ENCODE measurements at regions of chr13 and their contacts with region 1.

Region 1: DNA sequence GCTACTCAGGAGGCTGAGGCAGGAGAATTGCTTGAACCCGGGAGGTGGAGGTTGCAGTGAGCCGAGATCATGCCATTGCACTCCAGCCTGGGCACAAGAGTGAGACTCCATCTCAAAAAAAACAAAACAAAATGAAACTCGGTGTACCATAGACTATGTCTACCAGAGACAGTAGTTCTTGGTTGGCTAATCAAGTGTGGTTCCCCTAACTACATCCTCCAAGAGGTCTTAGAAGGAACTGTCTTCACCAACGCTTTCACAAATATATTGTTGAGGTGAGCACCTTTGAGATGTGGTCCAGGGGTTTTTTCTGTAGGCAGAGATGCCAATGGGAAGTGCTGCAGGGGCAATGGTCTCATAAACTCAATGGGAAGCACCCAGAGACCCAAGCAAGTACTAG is 48.0 kb downstream of the RFC3 start:
- DNase-seq: no peak
- ATAC-seq: no peak
- H3K4me3 ChIP-seq: no peak overlapping the region
- H3K4me3 Mint-ChIP-seq: no peak overlapping the region
- H3K27ac ChIP-seq: no peak overlapping the region
- H3K27ac Mint-ChIP-seq: no peak overlapping the region
- H3K4me1 ChIP-seq: no peaks in the 10 kb centered on the region
- H3K4me1 Mint-ChIP-seq: no peaks in the 10 kb centered on the region
- H3K27me3 ChIP-seq: no peaks in the 10 kb centered on the region
- H3K27me3 Mint-ChIP-seq: no peaks in the 10 kb centered on the region

Region 2: GRCh38 chr13:33953203-33953602 is 87.3 kb after region 1 on chr13:
- CTCF ChIA-PET with region 1: no interaction called
- POLR2A ChIA-PET with region 1: interaction called in 1 of 2 experiments, 11 read pairs
- DNase-seq: no peak
- ATAC-seq: no peak
- H3K4me3 ChIP-seq: no peak overlapping the region
- H3K4me3 Mint-ChIP-seq: no peak overlapping the region
- H3K27ac ChIP-seq: no peak overlapping the region
- H3K27ac Mint-ChIP-seq: no peak overlapping the region
- H3K4me1 ChIP-seq: no peaks in the 10 kb centered on the region
- H3K4me1 Mint-ChIP-seq: no peaks in the 10 kb centered on the region
- H3K27me3 ChIP-seq: no peaks in the 10 kb centered on the region
- H3K27me3 Mint-ChIP-seq: no peaks in the 10 kb centered on the region